ENCODE measurements at regions of chr4 and their contacts with region 1.

Region 1: DNA sequence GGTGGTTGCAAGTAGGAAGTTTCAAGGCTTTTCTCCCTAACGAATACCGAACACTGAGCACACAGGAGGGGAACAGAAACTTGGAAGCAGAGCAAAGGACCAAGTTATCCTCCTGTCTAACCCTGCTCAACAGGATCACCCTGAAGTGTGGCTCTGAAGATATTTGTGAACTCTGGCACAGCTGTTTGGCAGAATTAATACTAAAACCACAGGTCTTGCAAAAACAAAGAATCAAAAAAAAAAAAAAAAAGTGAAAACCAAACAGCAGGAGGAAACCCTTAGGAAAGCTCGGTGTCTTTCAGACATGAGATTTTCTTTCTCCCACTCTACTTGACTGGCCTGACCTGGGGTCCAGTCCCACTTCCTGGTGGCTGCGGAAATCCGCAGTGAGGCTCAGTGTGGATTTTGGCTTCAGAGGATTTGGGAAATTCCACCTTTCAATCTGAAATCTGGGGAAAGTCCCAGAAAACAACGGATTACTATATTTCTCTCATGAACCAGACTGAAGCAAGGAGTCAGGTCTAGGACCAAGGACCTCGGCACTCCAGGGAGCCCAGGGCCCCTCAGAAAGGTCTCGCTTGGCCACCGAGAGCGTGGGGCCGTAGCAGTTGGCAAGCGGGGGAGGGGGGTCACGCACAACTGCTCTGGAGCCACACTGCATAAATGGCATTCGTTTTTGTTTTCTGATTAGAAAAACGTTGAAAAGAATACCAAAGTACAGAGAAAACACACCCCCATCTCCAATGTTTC is 867 bp downstream of the TIFA start:
- DNase-seq: peak; percentile 52
- H3K4me3 ChIP-seq: peak overlapping the region; percentile 96
- H3K27ac ChIP-seq: peak overlapping the region; percentile 94
- H3K4me1 ChIP-seq: peaks cover 77% of the 10 kb centered on the region
- CTCF ChIP-seq: no peak; the same call in 1 of the 2 replicates

Region 2: DNA sequence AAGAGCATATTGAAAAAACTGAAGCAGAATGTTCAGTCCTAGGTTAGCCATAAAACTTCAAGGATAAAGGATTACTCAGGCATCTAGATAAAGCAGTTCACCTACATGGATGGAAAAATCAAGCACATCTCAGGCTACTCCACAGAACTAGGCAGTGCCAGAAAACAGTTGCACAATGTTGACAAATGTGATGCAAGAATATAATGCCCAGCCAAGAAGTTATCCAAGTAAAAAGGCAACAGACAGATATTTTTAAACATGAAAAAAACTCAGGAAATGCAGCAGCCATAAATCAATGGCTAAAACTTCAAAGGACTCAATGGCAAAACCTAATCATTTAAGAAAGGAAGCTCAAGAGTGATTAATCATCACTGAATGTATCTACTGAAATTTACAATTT is 595.6 kb before region 1 on chr4:
- CTCF ChIA-PET with region 1: no interaction called
- POLR2A ChIA-PET with region 1: no interaction called
- intact Hi-C with region 1: no loop called
- DNase-seq: no peak
- H3K4me3 ChIP-seq: no peak overlapping the region
- H3K27ac ChIP-seq: no peak overlapping the region
- H3K4me1 ChIP-seq: no peaks in the 10 kb centered on the region
- CTCF ChIP-seq: no peak

Region 3: DNA sequence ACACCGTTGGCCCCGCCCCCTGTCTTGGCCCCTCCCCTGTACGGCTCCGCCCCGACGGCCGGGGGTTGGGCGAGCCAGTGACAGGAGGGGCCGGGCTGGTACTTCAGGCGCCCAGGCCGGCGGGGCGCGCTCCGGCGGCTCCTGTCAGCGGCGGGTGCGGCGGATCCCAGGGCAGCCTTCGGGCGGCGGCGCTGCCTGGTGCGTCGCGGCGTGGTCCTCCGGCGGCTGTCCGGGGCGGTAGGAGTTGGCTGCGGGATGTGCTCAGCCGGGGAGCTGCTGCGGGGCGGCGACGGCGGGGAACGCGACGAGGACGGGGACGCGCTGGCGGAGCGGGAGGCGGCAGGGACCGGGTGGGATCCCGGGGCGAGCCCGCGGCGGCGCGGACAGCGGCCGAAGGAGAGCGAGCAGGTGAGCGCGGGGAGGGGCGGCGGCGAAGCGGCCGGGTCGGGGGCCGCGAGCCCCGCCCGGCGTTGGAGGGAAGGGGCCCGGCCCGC is 139.5 kb before region 1 on chr4 and contains the start of gene FAM241A:
- CTCF ChIA-PET with region 1: no interaction called
- POLR2A ChIA-PET with region 1: interaction called, 8 read pairs
- intact Hi-C with region 1: loop called (anchors 2 kb)
- DNase-seq: peak; percentile 92
- H3K4me3 ChIP-seq: peak within 1 kb of the TSS; percentile 75
- H3K27ac ChIP-seq: peak within 1 kb of the TSS; percentile 44
- H3K4me1 ChIP-seq: peaks cover 40% of the 10 kb centered on the region
- CTCF ChIP-seq: no peak
- total RNA-seq, gene FAM241A: 2.1 and 2.5 TPM in 2 replicates

Region 4: DNA sequence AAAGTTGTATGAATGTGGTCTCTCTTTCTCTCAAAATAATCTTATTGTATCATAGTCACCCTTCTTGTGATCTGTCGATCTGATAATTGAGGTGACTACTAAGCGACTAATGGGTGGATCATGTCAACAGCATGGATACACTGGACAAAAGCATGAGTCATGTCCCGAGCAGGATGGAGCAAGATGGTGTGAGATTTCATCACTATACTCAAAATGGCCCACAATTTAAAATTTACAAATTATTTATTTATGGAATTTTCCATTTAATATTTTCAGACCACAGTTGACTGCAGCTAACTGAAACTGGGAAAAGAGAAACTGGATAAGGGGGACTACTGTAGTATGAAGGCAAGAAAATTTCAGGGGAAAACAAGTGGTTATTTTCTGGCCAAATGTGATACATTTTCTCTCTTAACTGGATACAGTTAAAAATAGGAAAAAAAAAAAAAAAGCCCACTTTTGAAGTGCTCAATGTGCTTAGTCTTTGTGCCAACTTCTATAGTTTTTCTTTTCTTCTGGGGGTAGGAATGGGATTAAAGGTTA is 114.3 kb before region 1 on chr4:
- CTCF ChIA-PET with region 1: no interaction called
- POLR2A ChIA-PET with region 1: interaction called, 10 read pairs
- intact Hi-C with region 1: loop called (anchors 5 kb)
- DNase-seq: peak; percentile 38
- H3K4me3 ChIP-seq: peak overlapping the region; percentile 39
- H3K27ac ChIP-seq: peak overlapping the region; percentile 39
- H3K4me1 ChIP-seq: peaks cover 65% of the 10 kb centered on the region
- CTCF ChIP-seq: no peak

Region 5: DNA sequence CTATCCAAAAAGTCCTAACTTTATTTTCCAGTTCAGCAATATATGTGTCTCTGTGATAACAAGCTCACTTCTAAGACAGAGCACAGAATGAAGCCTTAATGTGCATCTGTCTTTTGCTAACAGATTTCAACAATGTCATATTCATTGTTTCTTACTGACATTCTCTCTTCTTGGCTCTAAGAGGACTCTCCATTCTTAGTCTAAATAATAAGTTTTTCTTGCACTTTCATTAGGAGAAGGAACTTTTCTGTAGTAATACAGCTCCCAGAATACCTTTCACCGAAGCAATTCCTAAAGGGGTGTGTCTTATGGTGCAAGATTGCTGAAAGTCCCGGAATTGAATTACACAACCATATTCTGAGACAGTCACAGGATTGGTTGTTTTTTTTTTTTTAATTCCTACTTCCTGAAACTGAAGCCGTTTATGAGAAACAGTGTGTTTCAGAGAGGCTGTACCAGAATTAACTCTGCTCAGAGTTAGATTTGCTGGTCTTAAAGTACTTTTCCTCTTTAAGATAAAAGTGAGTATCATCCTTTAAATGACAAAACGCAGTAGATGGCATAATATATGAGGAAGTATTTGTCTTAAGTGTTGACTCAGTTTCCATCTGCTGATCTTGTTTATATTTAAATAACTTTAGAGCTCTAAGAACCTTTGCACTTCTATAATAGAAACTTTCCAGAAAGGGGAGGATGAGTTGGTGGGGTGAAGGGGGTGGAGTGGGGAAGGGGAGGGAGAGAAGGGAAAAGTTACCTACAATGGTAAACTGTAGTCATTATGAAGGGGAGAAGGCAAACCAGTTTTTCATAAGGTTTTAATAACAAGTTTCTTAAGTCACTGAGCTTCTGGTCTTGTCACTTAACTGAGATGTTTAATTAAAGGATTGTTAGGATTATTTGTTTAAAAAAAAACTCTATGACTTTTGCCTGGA is 12.4 kb after region 1 on chr4 and contains the start of gene ALPK1:
- CTCF ChIA-PET with region 1: interaction called, 4 read pairs
- POLR2A ChIA-PET with region 1: interaction called, 21 read pairs
- intact Hi-C with region 1: no loop called
- DNase-seq: peak; percentile 81
- H3K4me3 ChIP-seq: peak within 1 kb of the TSS; percentile 71
- H3K27ac ChIP-seq: peak within 1 kb of the TSS; percentile 62
- H3K4me1 ChIP-seq: peaks cover 33% of the 10 kb centered on the region
- CTCF ChIP-seq: no peak
- total RNA-seq, gene ALPK1: 22.5 and 33.7 TPM in 2 replicates

Region 6: GRCh38 chr4:112312610-112313239 is 27.9 kb after region 1 on chr4:
- CTCF ChIA-PET with region 1: interaction called, 11 read pairs
- POLR2A ChIA-PET with region 1: interaction called, 37 read pairs
- intact Hi-C with region 1: loop called (anchors 1 kb)
- DNase-seq: peak; percentile 67
- H3K4me3 ChIP-seq: peak overlapping the region; percentile 37
- H3K27ac ChIP-seq: peak overlapping the region; percentile 79
- H3K4me1 ChIP-seq: peaks cover 28% of the 10 kb centered on the region
- CTCF ChIP-seq: no peak